Mucosa of descending colon (tissue), 3 donors: ENCODE measurements at regions of chr6 and their contacts with region 1.

Region 1: GRCh38 chr6:46848684-46849360 is 55.6 kb downstream of the MEP1A start:
- DNase-seq: peak; percentile 92 to 94 (median 94)
- ATAC-seq: peak; percentile 100
- H3K4me3 ChIP-seq: no peak overlapping the region
- H3K4me1 ChIP-seq: peaks cover 12% of the 10 kb centered on the region
- CTCF ChIP-seq: peak; percentile 89

Region 2: DNA sequence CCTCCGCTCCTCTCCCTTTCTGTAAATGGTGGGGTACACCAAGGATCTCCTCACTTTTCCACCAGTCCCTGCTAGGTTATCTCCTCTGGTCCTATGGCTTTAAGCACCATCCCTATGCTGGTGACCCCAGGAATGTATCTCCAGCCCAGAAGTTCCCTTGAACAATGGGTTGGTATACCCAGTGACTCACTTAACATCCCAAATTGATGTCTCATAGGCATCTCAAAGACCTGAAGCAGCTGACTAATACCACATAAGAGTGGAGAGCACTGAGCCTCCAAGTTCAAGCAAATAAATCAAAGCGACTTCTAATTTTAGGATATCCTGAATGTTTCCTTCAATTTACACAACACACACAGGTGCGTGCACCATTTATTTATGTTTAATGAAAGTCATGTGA is 145.0 kb after region 1 on chr6:
- intact Hi-C with region 1: loop called in 1 of 2 experiments (anchors 5 kb)
- DNase-seq: no peak
- ATAC-seq: no peak
- H3K4me3 ChIP-seq: no peak overlapping the region
- H3K4me1 ChIP-seq: peaks cover 15% of the 10 kb centered on the region
- CTCF ChIP-seq: no peak

Region 3: DNA sequence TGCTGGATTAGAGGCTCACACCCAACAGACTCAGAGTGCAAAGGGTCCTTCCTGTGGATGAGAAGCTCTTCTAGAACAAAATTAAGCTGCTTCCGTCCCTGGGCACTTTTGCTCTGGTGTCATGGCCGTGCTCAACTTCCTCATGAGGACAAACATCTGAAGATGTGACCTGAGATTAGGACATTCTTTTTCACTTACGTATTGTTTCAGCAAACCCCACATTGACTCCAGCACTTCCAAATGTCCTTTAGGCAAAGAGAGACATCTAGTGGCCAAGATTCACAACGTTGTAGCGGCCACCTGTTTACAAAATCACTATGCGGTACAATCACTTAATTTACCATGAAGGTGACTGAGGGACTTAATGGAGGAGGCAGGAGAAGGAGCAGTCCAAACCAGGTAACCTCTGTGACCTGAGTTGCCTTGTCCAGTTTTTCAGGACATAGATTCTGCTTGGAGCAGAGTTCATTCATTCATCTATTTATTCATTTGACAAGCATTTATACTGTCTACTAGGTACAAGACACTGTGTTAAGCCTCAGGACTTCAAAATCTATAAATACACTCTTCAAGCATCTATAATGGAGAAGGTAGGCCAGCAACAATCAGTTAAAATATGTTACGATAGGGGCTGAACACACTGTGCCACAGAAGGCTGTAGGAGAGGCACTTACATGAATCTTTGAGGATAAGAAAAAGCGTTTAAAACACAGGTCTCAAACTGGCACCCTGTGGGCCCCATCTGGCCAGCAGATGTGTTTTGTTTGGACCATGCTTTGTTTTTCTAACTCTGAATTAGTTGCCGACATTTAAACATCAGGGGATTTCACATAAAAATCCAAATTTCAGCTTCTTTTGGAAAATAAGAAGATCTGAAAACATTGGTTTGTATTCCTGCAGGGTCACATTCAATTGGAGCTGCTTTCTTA is 198.9 kb after region 1 on chr6:
- intact Hi-C with region 1: loop called in 1 of 2 experiments (anchors 5 kb)
- DNase-seq: peak in 2 of 3 donors; percentile 29 to 75
- ATAC-seq: peak; percentile 90
- H3K4me3 ChIP-seq: no peak overlapping the region
- H3K4me1 ChIP-seq: peaks cover 5% of the 10 kb centered on the region
- CTCF ChIP-seq: peak; percentile 28

Region 4: GRCh38 chr6:47134476-47135189 is 285.8 kb after region 1 on chr6:
- intact Hi-C with region 1: no loop called
- DNase-seq: peak in 1 of 3 donors; percentile 47
- ATAC-seq: peak; percentile 85
- H3K4me3 ChIP-seq: no peak overlapping the region
- H3K4me1 ChIP-seq: peaks cover 18% of the 10 kb centered on the region
- CTCF ChIP-seq: no peak